IMR-90 (cell line): ENCODE measurements at regions of chr1 and their contacts with region 1.

Region 1: GRCh38 chr1:237041795-237042525 is at the start of gene RYR2:
- DNase-seq: no peak
- ATAC-seq: peak; percentile 62
- H3K4me3 ChIP-seq: no peak within 1 kb of the TSS
- H3K27ac ChIP-seq: no peak within 1 kb of the TSS
- H3K4me1 ChIP-seq: no peaks in the 10 kb centered on the region
- H3K27me3 ChIP-seq: peaks cover 6% of the 10 kb centered on the region; the same call in 1 of the 2 replicates
- CTCF ChIP-seq: no peak
- POLR2A ChIP-seq: no peak
- RAD21 ChIP-seq: no peak
- total RNA-seq, gene RYR2: not detected in 2 replicates

Region 2: DNA sequence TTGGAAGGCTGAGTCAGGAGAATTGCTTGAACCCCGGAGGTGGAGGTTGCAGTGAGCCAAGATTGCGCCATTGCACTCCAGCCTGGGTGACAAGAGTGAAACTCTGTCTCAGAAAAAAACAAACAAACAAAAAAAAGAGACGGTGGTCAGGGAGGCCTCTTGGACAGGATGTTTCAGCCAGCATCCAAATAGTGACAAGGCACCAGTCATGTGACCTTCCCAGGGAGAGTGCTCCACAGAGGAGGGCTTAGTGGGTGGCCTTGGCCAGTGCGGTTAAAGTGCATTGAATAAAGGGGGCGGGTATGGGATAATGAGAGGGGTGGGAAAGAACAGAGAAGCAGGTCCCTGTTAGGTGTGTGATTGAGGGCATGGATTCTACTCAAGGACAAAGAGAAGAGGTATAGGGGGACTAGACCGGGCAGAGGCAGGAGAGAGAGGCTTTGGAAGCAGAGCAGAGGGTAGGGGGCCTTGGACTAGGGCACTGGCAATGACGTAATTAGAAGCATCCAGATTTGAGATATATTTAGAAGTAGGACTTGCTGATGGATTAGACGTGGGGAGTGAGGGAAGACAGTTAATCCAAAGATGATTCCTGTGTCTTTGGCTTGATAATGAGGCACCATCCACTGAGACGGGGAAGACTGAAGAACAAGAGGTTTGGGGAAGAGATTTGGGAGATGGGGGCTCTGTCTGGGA is 12.0 kb before region 1 on chr1:
- CTCF ChIA-PET with region 1: no interaction called
- POLR2A ChIA-PET with region 1: interaction called, 25 read pairs
- dilution Hi-C with region 1: no loop called
- in situ Hi-C with region 1: no loop called
- intact Hi-C with region 1: no loop called
- DNase-seq: no peak
- ATAC-seq: no peak
- H3K4me3 ChIP-seq: no peak overlapping the region
- H3K27ac ChIP-seq: no peak overlapping the region
- H3K4me1 ChIP-seq: no peaks in the 10 kb centered on the region
- H3K27me3 ChIP-seq: no peaks in the 10 kb centered on the region
- CTCF ChIP-seq: no peak
- POLR2A ChIP-seq: no peak
- RAD21 ChIP-seq: no peak

Region 3: GRCh38 chr1:237197470-237198425 is 155.8 kb after region 1 on chr1:
- CTCF ChIA-PET with region 1: no interaction called
- POLR2A ChIA-PET with region 1: no interaction called
- dilution Hi-C with region 1: no loop called
- in situ Hi-C with region 1: no loop called
- intact Hi-C with region 1: loop called (anchors 5 kb)
- DNase-seq: peak; percentile 16
- ATAC-seq: peak; percentile 88
- H3K4me3 ChIP-seq: no peak overlapping the region
- H3K27ac ChIP-seq: no peak overlapping the region
- H3K4me1 ChIP-seq: no peaks in the 10 kb centered on the region
- H3K27me3 ChIP-seq: no peaks in the 10 kb centered on the region
- CTCF ChIP-seq: no peak
- POLR2A ChIP-seq: no peak
- RAD21 ChIP-seq: no peak

Region 4: GRCh38 chr1:237664348-237664747 is 622.4 kb after region 1 on chr1:
- CTCF ChIA-PET with region 1: no interaction called
- POLR2A ChIA-PET with region 1: no interaction called
- dilution Hi-C with region 1: no loop called
- in situ Hi-C with region 1: no loop called
- intact Hi-C with region 1: loop called (anchors 5 kb)
- DNase-seq: no peak
- ATAC-seq: no peak
- H3K4me3 ChIP-seq: no peak overlapping the region
- H3K27ac ChIP-seq: no peak overlapping the region
- H3K4me1 ChIP-seq: no peaks in the 10 kb centered on the region
- H3K27me3 ChIP-seq: no peaks in the 10 kb centered on the region
- CTCF ChIP-seq: no peak
- POLR2A ChIP-seq: no peak
- RAD21 ChIP-seq: no peak

Region 5: DNA sequence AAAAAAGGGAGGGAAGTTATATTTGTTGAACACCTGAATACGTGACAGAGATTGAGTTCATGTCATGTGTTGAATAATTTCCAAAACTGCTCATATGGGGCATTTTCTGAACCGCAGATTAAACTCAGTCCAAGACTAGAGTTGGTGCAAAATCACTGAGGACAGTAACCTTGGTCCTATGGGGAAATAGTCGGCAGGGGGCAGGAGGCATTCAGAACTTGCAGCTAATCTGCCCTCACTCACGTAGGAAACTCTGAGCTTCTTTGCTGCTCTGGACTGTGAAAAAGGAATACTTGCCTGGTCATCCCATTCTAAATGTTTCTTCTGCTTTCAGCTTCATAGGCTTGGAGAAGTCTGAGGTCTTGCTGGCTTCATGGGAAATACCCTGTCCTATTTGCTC is 1077.1 kb after region 1 on chr1:
- CTCF ChIA-PET with region 1: no interaction called
- POLR2A ChIA-PET with region 1: no interaction called
- dilution Hi-C with region 1: no loop called
- in situ Hi-C with region 1: no loop called
- intact Hi-C with region 1: no loop called
- DNase-seq: no peak
- ATAC-seq: no peak
- H3K4me3 ChIP-seq: no peak overlapping the region
- H3K27ac ChIP-seq: no peak overlapping the region
- H3K4me1 ChIP-seq: no peaks in the 10 kb centered on the region
- H3K27me3 ChIP-seq: no peaks in the 10 kb centered on the region
- CTCF ChIP-seq: no peak
- POLR2A ChIP-seq: no peak
- RAD21 ChIP-seq: no peak